ENCODE measurements at regions of chr16 and their contacts with region 1.

Region 1: GRCh38 chr16:31400191-31400590 is 7.1 kb downstream of the ITGAD start:
- DNase-seq: no peak
- H3K4me3 Mint-ChIP-seq: no peak overlapping the region
- H3K27ac Mint-ChIP-seq: no peak overlapping the region
- H3K4me1 Mint-ChIP-seq: peaks cover 17% of the 10 kb centered on the region
- H3K27me3 Mint-ChIP-seq: no peaks in the 10 kb centered on the region

Region 2: GRCh38 chr16:31238041-31238440 is 162.2 kb before region 1 on chr16:
- intact Hi-C with region 1: no loop called
- DNase-seq: no peak
- H3K4me3 Mint-ChIP-seq: no peak overlapping the region
- H3K27ac Mint-ChIP-seq: no peak overlapping the region
- H3K4me1 Mint-ChIP-seq: no peaks in the 10 kb centered on the region
- H3K27me3 Mint-ChIP-seq: peaks cover 2% of the 10 kb centered on the region

Region 3: DNA sequence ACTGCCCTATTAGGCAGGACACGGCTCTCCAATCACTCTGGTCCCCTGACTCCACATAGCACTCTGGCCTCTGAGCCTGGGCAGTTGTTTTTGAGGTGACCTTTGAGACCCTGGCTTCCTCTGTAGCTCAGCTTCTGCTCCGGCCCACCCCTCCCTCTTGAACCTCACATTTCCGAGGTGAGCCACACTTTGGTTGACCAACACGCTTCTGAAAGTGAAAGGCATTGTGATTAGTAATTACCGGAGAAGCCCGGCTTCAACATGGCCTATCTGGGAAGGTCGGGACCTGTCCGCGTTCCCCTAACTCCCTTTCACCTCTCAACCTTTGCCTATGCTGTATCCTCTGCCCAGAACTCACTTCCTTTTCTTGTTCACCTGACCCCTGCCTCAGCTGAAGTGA is 55.5 kb before region 1 on chr16:
- intact Hi-C with region 1: no loop called
- DNase-seq: no peak
- H3K4me3 Mint-ChIP-seq: no peak overlapping the region
- H3K27ac Mint-ChIP-seq: peak overlapping the region; percentile 53
- H3K4me1 Mint-ChIP-seq: peaks cover 42% of the 10 kb centered on the region
- H3K27me3 Mint-ChIP-seq: peaks cover 11% of the 10 kb centered on the region

Region 4: DNA sequence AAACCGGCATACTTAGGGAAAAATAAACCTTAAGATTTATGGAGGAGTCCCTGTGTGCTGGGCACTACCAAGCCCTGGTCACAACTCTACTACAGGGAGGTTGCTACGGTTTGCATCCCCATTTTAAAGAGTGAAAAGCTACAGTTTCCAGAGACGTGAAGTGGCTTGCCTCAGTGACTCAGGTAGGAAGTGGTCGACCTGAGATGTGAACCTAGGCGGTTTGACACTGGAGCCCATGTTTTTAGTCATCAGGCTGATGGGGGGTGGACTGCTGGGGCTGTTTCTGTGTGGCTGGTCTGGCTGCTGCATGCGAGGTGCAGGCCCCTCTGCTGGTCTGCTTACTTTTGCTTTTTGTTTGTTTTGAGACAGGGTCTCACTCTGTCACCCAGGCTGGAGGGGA is 21.4 kb after region 1 on chr16:
- intact Hi-C with region 1: loop called (anchors 2 kb)
- DNase-seq: peak; percentile 69
- H3K4me3 Mint-ChIP-seq: peak overlapping the region; percentile 44
- H3K27ac Mint-ChIP-seq: peak overlapping the region; percentile 77
- H3K4me1 Mint-ChIP-seq: peaks cover 62% of the 10 kb centered on the region
- H3K27me3 Mint-ChIP-seq: peaks cover 2% of the 10 kb centered on the region